ENCODE measurements at regions of chr11 and their contacts with region 1.

Region 1: DNA sequence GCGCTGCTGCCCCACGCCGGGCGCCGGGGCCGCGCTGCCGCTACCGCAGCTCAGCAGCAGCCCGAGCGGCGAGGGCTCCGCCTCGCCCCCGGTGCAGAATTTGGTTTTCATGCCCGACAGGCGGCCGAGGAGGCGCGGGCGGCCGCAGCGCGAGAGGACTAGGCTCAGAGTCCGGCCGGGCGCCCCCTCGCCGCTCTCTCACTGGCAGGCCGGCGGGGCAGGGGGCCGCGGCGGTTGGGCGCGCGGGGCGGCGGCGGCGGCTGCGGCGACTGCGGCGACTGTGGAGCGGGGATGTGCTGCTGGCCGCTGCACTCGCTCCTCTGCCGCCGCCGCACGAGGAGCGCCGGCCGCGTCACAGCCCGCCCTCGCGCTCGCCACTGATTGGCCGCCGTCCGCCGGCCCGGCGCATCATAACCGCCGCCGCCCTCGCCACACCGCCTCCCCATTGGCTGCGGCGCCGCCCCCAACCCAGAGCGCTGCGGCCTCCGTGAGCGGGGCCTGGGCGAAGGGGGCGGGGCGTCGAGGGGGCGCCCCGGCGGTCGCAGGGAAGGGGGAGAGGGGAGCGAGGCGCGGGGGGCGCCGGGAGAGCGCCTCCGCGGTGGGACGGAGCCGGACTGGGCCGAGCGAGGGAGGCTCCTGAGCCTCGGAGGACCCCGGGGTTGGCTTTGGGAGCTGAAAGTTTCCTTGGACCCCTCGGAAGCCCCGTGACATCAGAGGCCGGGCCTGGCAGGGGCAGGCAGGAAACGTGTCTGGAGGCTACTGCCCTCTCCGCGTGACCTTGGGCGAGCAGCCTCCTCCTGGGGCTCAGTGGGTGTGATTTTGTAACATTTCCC is at the start of gene CHKA:
- DNase-seq: peak; percentile 96
- total RNA-seq, gene CHKA: 10.2 TPM

Region 2: GRCh38 chr11:67983951-67984350 is 137.3 kb before region 1 on chr11:
- intact Hi-C with region 1: no loop called
- DNase-seq: no peak

Region 3: GRCh38 chr11:68030318-68031138 is 90.8 kb before region 1 on chr11 and contains the start of gene NDUFS8:
- intact Hi-C with region 1: loop called (anchors 5 kb)
- DNase-seq: peak; percentile 96
- total RNA-seq, gene NDUFS8: 315 TPM

Region 4: DNA sequence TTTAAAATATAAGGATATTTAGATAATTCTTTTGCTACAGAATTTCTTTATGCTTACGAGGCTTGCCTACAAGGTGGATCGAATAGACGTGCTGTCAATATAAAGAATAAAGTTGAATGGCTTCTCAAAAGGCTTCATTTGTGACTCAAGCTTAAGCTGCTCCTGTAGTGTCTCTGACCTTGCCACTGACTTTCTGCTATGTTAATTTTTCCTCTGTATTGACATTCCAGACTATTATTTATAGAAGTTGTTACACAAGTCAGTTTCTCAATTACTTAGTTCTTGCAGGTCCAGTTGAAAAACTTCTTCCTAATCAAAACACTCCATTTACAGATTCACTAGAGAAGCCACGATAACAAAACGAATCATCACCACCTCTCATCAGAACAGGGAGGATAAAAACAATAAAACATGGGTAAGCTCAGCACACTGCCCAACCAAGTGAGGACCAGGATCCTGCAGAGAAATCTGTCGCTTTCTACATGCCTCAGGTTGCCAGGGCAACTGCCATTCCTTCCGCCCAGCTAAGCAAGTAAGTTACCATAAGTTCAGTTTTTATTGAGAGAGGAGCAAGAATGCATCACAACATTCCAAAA is 38.9 kb after region 1 on chr11:
- intact Hi-C with region 1: no loop called
- DNase-seq: no peak